Heart right ventricle (tissue), 16 donors: ENCODE measurements at regions of chr1 and their contacts with region 1.

Region 1: DNA sequence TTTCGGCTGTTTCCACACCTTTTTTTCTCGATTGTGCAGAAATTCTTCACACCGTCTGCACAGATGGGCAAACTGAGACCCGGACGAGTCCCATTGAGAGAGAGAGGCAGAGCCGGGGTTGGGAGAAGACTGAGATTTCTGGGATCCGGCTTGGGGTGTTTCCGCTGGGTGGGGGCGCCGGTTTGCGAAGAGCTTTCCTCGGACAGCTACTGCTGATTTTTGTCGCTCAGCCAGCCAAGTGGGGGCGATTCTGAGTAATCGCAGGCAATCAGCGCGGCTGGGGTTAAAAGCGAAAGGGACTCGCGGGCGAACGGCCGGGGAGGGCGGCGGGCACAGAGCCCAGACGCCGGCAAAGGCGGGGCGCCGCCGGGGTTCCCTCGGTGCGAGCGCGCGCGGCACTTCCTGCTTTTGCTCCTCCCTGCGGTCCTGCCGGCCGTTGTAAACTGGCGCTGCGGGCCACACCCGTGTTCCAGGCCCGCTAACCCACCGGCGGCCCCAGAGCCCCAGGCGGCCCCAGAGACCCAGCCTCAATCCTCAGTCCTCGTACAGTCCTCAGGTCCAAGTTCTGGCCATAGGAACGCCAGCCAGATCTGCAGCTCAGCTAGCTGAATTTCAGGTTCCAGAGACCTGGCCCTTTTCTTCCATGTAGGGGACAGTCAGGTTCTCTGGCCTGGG is 32.4 kb upstream of the JUN start:
- DNase-seq: peak; percentile 90 to 93
- ATAC-seq: peak; percentile 85 to 95 (median 92)
- H3K4me3 ChIP-seq: peak overlapping the region; percentile 39 to 67 (median 59)
- H3K27ac ChIP-seq: peak overlapping the region; percentile 80 to 97 (median 90)
- H3K4me1 ChIP-seq: peaks cover 0 to 74% (median 32%) of the 10 kb centered on the region in 9 donors
- H3K27me3 ChIP-seq: no peaks in the 10 kb centered on the region
- CTCF ChIP-seq: peak in 6 of 9 donors; percentile 8 to 35 (median 19)

Region 2: GRCh38 chr1:58874757-58875755 is 58.8 kb after region 1 on chr1:
- intact Hi-C with region 1: loop called in 2 of 10 experiments (anchors 5 to 10 kb)
- DNase-seq: peak in 1 of 2 donors; percentile 46
- ATAC-seq: peak; percentile 73 to 89 (median 81)
- H3K4me3 ChIP-seq: no peak overlapping the region
- H3K27ac ChIP-seq: peak overlapping the region in 8 of 10 donors; percentile 12 to 59 (median 56)
- H3K4me1 ChIP-seq: peaks cover 12 to 29% (median 16%) of the 10 kb centered on the region in 9 donors
- H3K27me3 ChIP-seq: no peaks in the 10 kb centered on the region
- CTCF ChIP-seq: no peak

Region 3: GRCh38 chr1:58883037-58883887 is 67.1 kb after region 1 on chr1:
- intact Hi-C with region 1: loop called in 2 of 10 experiments (anchors 5 to 10 kb)
- DNase-seq: peak; percentile 62 to 76
- ATAC-seq: peak; percentile 49 to 87 (median 73)
- H3K4me3 ChIP-seq: no peak overlapping the region
- H3K27ac ChIP-seq: peak overlapping the region; percentile 24 to 89 (median 74)
- H3K4me1 ChIP-seq: peaks cover 13 to 71% (median 54%) of the 10 kb centered on the region in 9 donors
- H3K27me3 ChIP-seq: no peaks in the 10 kb centered on the region
- CTCF ChIP-seq: no peak

Region 4: DNA sequence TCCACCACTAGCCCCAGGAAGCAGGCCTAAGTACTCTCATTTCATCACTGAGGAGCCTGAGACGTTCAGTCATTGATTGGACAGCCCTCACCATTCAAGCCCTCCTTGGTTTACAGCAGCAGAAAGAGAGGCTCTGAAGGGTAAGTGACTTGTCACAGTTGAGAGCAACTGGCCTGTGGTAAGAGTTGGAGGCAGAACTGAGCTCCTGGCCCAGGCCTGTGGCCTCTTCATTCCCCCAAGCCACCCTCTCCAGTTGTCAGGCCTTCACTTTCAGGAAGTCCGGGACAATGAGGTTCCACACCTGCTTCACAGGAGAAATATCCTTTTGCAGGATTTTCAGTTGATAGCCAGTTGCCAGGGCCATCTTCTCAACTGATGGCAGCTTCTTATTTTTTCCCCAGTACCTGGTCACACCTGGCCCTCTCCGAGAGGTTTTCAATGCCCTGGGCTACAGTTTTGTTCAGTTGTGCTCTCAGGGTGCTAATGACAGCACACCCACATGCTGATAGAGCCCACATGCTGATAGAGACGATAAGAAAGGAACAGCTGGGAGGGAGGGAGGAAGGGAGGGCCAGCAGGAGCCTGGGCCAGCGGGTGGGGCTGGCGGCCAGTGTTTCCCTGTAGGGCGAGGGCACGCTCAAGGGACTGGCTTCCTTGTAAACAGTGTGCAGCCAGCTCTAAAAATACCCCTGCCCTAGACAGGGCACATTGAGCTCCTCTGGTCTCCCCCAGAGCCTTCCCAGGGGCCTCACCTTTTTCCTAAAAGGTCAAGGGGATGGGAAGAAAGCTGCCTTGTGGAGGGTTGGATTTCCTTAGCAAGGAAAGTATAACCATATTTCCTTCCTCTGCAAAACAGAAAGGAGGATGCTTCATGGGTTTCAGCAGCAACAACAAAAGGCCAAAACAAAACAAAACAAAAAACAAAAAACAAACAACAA is 80.3 kb after region 1 on chr1:
- intact Hi-C with region 1: loop called in 5 of 10 experiments (anchors 5 to 10 kb)
- DNase-seq: peak; percentile 60 to 73
- ATAC-seq: peak; percentile 43 to 91 (median 74)
- H3K4me3 ChIP-seq: no peak overlapping the region
- H3K27ac ChIP-seq: peak overlapping the region; percentile 52 to 93 (median 73)
- H3K4me1 ChIP-seq: peaks cover 35 to 86% (median 74%) of the 10 kb centered on the region in 9 donors
- H3K27me3 ChIP-seq: no peaks in the 10 kb centered on the region
- CTCF ChIP-seq: peak in 1 of 9 donors; percentile 18

Region 5: GRCh38 chr1:58903514-58904298 is 87.5 kb after region 1 on chr1:
- intact Hi-C with region 1: loop called in 6 of 10 experiments (anchors 2 to 10 kb)
- DNase-seq: peak; percentile 95 to 96
- ATAC-seq: peak; percentile 93 to 99 (median 96)
- H3K4me3 ChIP-seq: peak overlapping the region in 9 of 10 donors; percentile 35 to 67 (median 58)
- H3K27ac ChIP-seq: peak overlapping the region; percentile 90 to 99 (median 96)
- H3K4me1 ChIP-seq: peaks cover 5 to 43% (median 27%) of the 10 kb centered on the region in 9 donors
- H3K27me3 ChIP-seq: no peaks in the 10 kb centered on the region
- CTCF ChIP-seq: peak in 3 of 9 donors; percentile 6 to 7 (median 6)

Region 6: DNA sequence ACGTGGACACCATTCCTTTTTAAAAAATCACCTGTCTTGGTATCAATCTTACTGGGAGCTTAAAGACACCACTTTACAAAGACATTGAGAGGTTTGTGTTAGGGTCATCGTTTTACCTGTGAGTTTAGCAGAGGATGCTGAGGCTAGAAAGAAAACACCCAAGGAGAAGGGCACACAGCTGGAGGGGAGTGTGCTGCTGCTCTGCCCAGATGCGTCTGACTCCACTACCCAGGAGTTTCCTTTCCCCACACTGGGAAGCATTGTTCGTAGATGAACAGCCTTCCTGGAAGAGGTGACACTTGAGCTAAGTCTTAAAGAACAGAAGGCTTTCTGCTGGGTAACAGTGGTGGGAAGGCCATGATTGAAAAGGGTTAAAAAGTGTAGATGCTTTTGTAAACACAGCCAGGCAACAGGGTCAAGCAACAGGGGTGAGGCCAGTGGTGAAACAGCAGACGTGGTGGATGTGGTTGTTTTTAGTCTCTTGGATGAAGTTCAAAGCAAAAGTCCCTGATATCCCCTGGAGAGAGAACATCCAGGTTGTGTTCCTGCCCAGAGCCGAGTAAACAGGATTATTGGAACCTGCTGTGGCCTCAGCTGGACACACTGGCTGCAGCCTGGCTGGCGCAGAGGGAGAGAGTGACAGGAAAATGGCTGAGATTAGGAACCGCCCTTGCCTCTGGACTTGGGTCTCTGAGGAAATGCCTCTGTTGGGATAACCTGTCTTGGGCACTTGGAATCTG is 166.2 kb after region 1 on chr1:
- intact Hi-C with region 1: loop called in 1 of 10 experiments (anchors 10 kb)
- DNase-seq: peak; percentile 34 to 40
- ATAC-seq: peak; percentile 39 to 97 (median 84)
- H3K4me3 ChIP-seq: no peak overlapping the region
- H3K27ac ChIP-seq: peak overlapping the region in 9 of 10 donors; percentile 24 to 68 (median 52)
- H3K4me1 ChIP-seq: peaks cover 5 to 34% (median 27%) of the 10 kb centered on the region in 9 donors
- H3K27me3 ChIP-seq: no peaks in the 10 kb centered on the region
- CTCF ChIP-seq: no peak

Region 7: DNA sequence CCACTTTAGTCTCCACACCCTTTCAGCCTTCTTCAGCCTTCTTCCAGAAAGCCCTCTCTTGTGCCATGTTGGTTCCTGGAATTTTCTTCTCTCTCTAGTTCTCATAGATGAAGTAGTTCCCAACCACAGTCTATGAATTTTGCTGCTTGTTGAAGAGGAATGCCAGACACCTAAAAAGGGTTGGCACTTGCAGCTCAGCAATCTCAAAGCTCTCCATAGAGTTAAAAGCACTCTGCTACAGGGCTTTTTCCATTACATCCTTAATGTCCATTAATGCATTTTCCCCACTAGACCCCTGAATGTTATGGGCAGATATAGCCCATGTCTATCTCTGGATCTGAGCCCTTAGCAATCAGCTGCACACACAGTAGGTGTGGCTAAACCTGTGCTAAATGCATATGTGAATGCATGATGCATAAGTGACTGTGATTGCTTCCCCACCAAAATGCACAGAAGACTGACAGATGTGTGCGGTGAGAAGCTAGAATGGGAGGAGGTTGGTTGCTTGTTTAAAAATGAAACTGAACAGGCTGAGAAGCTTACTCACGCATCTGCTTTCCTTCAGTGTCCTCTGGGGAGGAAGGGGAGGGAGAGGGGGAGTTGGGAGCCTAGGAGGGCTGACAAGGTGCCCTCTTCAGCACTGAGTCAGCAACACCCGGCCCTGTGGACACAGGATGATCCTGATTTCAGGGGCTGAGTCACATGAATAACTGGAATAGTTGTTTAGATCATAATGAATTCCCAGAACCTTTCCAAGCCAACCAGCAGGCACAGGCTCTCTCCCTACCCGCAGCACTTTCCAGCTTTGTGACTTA is 334.6 kb after region 1 on chr1:
- intact Hi-C with region 1: loop called in 1 of 10 experiments (anchors 10 kb)
- DNase-seq: peak; percentile 67 to 86
- ATAC-seq: peak; percentile 85 to 98 (median 94)
- H3K4me3 ChIP-seq: peak overlapping the region in 6 of 10 donors; percentile 1 to 39 (median 21)
- H3K27ac ChIP-seq: peak overlapping the region; percentile 49 to 89 (median 78)
- H3K4me1 ChIP-seq: peaks cover 9 to 44% (median 36%) of the 10 kb centered on the region in 9 donors
- H3K27me3 ChIP-seq: no peaks in the 10 kb centered on the region
- CTCF ChIP-seq: no peak